Panc1 (cell line): ENCODE measurements at regions of chr11 and their contacts with region 1.

Region 1: GRCh38 chr11:68741463-68741862 is 9.9 kb downstream of the TESMIN start:
- DNase-seq: no peak
- ATAC-seq: no peak
- H3K4me3 ChIP-seq: no peak overlapping the region
- H3K27ac ChIP-seq: no peak overlapping the region
- H3K4me1 ChIP-seq: no peaks in the 10 kb centered on the region
- H3K27me3 ChIP-seq: no peaks in the 10 kb centered on the region
- CTCF ChIP-seq: no peak

Region 2: GRCh38 chr11:68447015-68447801 is 294.3 kb before region 1 on chr11:
- CTCF ChIA-PET with region 1: no interaction called
- POLR2A ChIA-PET with region 1: no interaction called
- in situ Hi-C with region 1: no loop called
- intact Hi-C with region 1: no loop called
- DNase-seq: peak; percentile 20
- ATAC-seq: peak; percentile 95
- H3K4me3 ChIP-seq: no peak overlapping the region
- H3K27ac ChIP-seq: no peak overlapping the region
- H3K4me1 ChIP-seq: peaks cover 4% of the 10 kb centered on the region; the same call in 1 of the 2 replicates
- H3K27me3 ChIP-seq: no peaks in the 10 kb centered on the region
- CTCF ChIP-seq: peak; percentile 98

Region 3: DNA sequence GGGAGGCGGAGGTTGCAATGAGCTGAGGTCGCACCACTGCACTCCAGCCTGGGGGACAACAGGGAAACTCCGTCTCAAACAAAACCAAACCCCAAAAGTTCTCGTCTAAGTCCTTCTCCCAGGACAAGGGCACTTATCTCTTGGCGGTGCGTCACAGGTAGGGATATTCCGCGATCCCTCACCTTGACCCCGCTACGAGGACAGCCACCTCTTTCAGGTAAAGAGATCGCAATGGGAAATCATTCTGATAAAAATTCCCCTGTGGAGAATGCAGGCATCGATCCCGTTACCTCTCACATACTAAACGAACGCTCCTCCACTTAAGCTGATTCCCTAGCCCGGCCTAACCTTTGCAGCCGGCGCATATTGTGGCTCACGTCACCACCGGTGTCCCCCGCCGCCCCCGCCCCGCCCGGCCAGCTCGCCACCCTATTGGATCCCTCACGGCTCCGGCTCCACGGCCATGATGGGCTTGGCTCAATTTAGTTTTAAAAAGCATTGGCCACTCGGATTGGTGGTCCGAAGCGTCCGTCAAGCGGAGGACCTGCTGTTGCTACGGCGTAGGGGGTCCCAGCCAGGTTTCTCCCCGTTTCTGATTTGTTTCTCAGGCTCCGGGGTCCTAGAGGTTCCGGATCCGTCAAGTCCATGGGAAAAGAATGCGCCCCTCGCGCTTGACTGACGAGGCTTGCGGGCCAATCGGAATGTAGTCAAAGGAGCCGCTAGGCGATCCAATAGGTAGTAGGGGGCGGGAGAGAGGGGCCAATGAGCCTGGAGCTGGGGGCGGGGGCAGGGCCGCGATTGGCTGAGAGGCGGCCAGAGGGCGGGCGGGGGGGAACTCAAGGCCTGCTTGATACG is 281.4 kb before region 1 on chr11:
- CTCF ChIA-PET with region 1: no interaction called
- POLR2A ChIA-PET with region 1: interaction called, 19 read pairs
- in situ Hi-C with region 1: no loop called
- intact Hi-C with region 1: no loop called
- DNase-seq: peak; percentile 96
- ATAC-seq: peak; percentile 90
- H3K4me3 ChIP-seq: peak overlapping the region; percentile 57 to 74
- H3K27ac ChIP-seq: peak overlapping the region; percentile 95
- H3K4me1 ChIP-seq: peaks cover 38% of the 10 kb centered on the region
- H3K27me3 ChIP-seq: no peaks in the 10 kb centered on the region
- CTCF ChIP-seq: no peak

Region 4: DNA sequence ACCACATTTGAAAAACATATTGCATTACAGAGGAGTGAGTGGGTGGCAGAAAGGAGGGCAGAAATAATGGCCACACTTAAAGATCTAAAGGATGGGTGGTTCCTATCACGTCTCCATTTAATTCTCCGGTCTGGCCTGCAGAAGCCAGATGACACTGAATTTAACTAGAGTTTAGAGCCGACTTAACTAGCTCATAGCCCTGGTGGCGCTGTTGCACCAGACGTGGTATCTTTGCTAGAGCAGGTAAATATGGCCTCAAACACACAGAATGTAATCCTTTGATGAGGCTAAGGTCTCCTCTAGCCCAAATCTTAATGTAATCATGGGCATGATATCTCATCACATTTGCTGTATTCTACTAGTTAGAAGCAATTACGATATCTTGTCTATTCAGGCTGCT is 108.7 kb before region 1 on chr11:
- CTCF ChIA-PET with region 1: interaction called, 18 read pairs
- POLR2A ChIA-PET with region 1: no interaction called
- in situ Hi-C with region 1: no loop called
- intact Hi-C with region 1: no loop called
- DNase-seq: peak; percentile 20
- ATAC-seq: peak; percentile 96
- H3K4me3 ChIP-seq: no peak overlapping the region
- H3K27ac ChIP-seq: no peak overlapping the region
- H3K4me1 ChIP-seq: no peaks in the 10 kb centered on the region
- H3K27me3 ChIP-seq: peaks cover 3% of the 10 kb centered on the region
- CTCF ChIP-seq: peak; percentile 87